MCF 10A (cell line): ENCODE measurements at regions of chr12 and their contacts with region 1.

Region 1: DNA sequence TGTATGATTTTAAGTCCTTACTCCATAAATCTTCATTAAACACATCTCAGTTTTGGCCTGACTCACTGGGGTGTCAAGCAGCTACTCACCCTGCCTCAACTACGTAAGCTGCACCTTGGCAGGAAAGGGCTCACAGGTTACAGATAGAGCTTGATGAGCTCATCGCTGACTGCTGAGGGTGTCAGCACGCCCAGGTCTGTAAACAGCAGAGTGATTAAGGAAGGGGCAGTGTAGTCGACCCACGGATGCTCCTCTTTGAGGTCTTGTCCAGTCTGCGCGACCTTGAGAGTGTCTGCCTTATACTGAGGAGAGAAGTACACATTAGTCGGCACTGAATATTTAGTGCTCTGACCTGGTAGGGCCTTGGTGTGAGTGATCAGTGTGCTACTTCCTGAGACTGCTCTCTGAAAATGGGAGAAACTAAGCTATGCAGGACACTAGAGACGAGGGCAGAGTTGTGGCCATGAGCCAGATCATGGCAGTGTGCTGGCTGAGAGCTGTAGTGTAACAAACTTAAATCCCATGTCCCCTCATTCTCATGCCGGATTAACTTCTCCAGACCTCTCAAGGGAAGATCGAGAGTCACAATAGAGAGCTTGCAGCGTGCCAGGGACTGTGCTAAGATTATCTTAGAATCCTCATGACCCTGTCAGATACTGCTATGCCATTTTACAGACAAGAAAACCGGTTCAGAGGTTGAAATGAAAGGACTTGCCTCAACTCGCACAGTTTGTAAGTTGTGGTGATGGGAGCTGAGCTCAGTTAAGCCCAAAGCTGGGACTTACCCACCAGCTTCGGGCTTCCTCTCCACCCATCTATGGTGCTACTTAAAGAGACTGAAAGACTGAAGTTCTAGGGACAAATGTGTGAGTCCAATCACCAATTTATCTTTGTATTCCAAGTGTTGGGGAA is 11.6 kb downstream of the EIF2B1 start:
- DNase-seq: no peak
- H3K4me3 Mint-ChIP-seq: no peak overlapping the region
- H3K27ac Mint-ChIP-seq: peak overlapping the region; percentile 59
- H3K4me1 Mint-ChIP-seq: no peaks in the 10 kb centered on the region
- H3K27me3 Mint-ChIP-seq: no peaks in the 10 kb centered on the region
- CTCF ChIP-seq: no peak

Region 2: DNA sequence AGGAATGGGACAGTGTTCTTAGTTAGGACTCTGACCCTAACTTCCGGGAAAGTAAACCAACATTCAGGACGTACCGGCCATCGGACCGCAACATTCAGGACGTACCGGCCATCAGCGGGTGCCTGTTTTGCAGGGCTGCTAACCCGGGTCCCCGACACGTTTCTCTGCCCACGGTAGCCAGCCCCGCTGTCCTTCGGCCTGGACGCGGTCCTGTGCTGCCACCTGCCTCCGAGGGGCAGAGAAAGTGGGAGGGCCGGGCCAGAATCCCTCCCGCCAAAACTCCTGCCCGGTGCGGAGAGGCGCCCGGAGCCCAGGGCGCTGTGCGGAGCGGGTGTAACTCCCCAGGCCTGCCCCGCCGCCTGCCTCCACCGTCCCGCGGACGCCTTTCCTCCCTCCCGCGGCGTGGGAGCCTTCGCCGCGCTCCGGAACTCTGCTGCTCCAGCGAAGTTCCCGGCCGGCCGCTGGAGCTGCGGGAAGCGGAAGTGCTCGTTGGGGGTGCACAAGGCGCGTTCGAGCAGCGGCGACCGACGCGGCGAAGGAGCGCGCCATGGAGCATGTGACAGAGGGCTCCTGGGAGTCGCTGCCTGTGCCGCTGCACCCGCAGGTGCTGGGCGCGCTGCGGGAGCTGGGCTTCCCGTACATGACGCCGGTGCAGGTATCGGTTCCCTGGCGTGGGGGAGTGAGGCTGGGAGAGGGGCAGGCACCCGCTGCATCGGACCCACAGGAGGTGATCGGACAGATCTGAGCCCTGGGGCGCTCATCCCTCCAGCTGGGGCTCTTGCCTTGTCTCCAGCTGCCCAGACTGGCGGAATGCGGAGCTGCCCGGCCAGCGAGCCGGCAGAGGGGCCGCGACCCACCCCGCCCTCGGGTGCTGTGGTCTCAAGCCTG is 20.0 kb before region 1 on chr12 and contains the start of gene DDX55:
- CTCF ChIA-PET with region 1: no interaction called
- POLR2A ChIA-PET with region 1: interaction called, 33 read pairs
- intact Hi-C with region 1: no loop called
- DNase-seq: peak; percentile 82
- H3K4me3 Mint-ChIP-seq: peak within 1 kb of the TSS; percentile 98
- H3K27ac Mint-ChIP-seq: peak within 1 kb of the TSS; percentile 92
- H3K4me1 Mint-ChIP-seq: peaks cover 23% of the 10 kb centered on the region
- H3K27me3 Mint-ChIP-seq: no peaks in the 10 kb centered on the region
- CTCF ChIP-seq: peak; percentile 42
- total RNA-seq, gene DDX55: 28.4 and 30.5 TPM in 2 replicates

Region 3: GRCh38 chr12:123633379-123634141 is 11.7 kb after region 1 on chr12 and contains the starts of genes EIF2B1 and GTF2H3:
- CTCF ChIA-PET with region 1: interaction called, 4 read pairs
- POLR2A ChIA-PET with region 1: interaction called, 17 read pairs
- intact Hi-C with region 1: no loop called
- DNase-seq: peak; percentile 97
- H3K4me3 Mint-ChIP-seq: peak within 1 kb of the TSS; percentile 93
- H3K27ac Mint-ChIP-seq: peak within 1 kb of the TSS; percentile 99
- H3K4me1 Mint-ChIP-seq: peaks cover 9% of the 10 kb centered on the region
- H3K27me3 Mint-ChIP-seq: no peaks in the 10 kb centered on the region
- CTCF ChIP-seq: no peak
- total RNA-seq, gene EIF2B1: 38.9 and 47.3 TPM in 2 replicates
- total RNA-seq, gene GTF2H3: 76.9 and 85.0 TPM in 2 replicates